Head of caudate nucleus (tissue), 42 donors: ENCODE measurements at regions of chr9 and their contacts with region 1.

Region 1: GRCh38 chr9:22863106-22863505 is 416.5 kb downstream of the DMRTA1 start:
- DNase-seq: no peak

Region 2: DNA sequence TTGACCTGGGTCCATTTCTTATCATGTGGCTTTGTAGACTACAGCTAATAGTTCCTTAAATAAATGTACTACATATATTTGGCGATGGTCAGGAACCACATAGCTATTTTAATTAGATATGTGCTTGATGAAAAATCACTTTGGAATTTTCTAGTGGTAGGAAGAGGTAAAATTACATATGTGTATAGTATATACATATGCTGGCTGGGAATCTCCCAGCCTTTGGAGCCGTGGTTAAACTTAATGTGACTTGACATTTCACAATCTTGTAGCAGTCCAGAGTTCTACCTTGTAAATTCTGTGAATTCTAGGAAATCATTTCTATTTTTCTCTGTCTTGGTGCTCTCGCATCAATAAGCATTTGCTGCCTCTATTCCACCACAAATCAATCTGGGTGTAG is 148.6 kb after region 1 on chr9:
- intact Hi-C with region 1: loop called (anchors 10 kb)
- DNase-seq: no peak